Ovary (tissue), 10 donors: ENCODE measurements at regions of chr22 and their contacts with region 1.

Region 1: GRCh38 chr22:20981787-20982562 is at the start of gene LZTR1:
- DNase-seq: peak; percentile 81 to 88 (median 81)
- H3K4me3 ChIP-seq: peak within 1 kb of the TSS; percentile 84
- H3K27ac ChIP-seq: peak within 1 kb of the TSS; percentile 82 to 87
- H3K4me1 ChIP-seq: peaks cover 17% of the 10 kb centered on the region
- H3K27me3 ChIP-seq: no peaks in the 10 kb centered on the region
- CTCF ChIP-seq: peak; percentile 43 to 77 (median 71)
- EP300 ChIP-seq: no peak
- POLR2A ChIP-seq: peak; percentile 95
- total RNA-seq, gene LZTR1: 30.4 to 73.4 (median 51.6) TPM

Region 2: DNA sequence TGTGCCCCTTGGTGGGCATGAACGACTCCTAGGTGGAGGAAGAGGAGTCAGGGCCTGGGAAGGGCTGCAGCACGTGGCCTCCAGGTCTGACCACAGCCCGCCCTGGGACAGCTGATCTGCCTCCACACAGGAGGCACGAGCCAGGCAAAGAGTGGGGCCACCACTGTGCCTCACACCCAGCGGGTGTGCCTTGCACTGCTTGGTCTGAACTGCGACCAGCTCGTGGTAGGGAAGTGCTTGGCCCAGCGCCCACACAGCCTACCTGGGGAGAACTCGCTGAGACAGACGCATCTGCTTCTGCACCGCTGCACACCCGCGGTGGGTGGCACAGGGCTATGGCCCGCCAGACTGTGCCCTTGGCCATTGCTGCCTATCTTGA is 374.5 kb before region 1 on chr22:
- intact Hi-C with region 1: no loop called
- DNase-seq: no peak
- H3K4me3 ChIP-seq: no peak overlapping the region
- H3K27ac ChIP-seq: no peak overlapping the region
- H3K4me1 ChIP-seq: no peaks in the 10 kb centered on the region
- H3K27me3 ChIP-seq: no peaks in the 10 kb centered on the region
- CTCF ChIP-seq: no peak
- EP300 ChIP-seq: no peak
- POLR2A ChIP-seq: no peak

Region 3: GRCh38 chr22:21014202-21014725 is 32.3 kb after region 1 on chr22:
- intact Hi-C with region 1: no loop called
- DNase-seq: peak; percentile 88 to 93 (median 91)
- H3K4me3 ChIP-seq: peak overlapping the region; percentile 40
- H3K27ac ChIP-seq: peak overlapping the region; percentile 51 to 83
- H3K4me1 ChIP-seq: peaks cover 6% of the 10 kb centered on the region
- H3K27me3 ChIP-seq: no peaks in the 10 kb centered on the region
- CTCF ChIP-seq: no peak
- EP300 ChIP-seq: no peak
- POLR2A ChIP-seq: no peak

Region 4: GRCh38 chr22:21045585-21046294 is 63.8 kb after region 1 on chr22 and contains the start of gene LRRC74B:
- intact Hi-C with region 1: loop called in 1 of 4 experiments (anchors 5 kb)
- DNase-seq: peak; percentile 89 to 95 (median 92)
- H3K4me3 ChIP-seq: peak within 1 kb of the TSS; percentile 44
- H3K27ac ChIP-seq: peak within 1 kb of the TSS in 1 of 2 donors; percentile 52
- H3K4me1 ChIP-seq: peaks cover 4% of the 10 kb centered on the region
- H3K27me3 ChIP-seq: no peaks in the 10 kb centered on the region
- CTCF ChIP-seq: no peak
- EP300 ChIP-seq: no peak
- POLR2A ChIP-seq: no peak
- total RNA-seq, gene LRRC74B: 0.25 to 3.0 (median 0.77) TPM in 4 of 7 donors, not detected in the others

Region 5: DNA sequence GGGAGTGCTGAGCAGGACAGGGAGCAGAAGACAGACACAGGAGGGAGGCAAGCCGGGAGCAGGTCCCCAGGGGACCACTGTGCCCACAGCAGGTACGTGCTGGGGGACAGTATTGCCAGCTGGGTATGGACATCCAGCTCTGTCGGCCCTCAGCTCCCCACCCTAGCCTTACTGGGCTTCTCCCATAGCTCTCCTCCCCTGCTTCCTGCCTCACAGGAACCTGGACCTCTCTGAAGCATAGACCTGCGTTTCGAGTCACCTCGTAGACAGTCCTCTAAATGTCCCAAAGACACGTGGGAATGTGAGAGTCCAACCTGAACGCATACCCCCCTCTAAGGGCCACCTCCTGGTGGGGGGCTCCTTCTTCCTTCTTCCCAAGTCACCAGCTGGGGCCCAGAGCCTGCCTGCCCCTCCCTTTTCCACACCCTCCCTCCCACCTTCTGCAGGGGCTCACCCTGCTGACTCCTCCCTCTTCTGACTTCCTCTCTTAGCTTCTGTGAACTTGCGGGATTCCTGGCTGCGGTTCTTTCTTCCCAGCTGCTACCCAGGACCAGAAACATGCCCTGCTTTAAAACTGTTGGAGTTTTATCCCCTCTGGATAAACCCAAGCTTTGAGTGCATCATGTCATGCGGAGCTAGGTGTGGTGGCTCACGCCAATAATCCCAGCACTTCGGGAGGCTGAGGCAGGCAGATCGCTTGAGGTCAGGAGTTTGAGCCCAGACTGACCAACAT is 73.8 kb after region 1 on chr22:
- intact Hi-C with region 1: no loop called
- DNase-seq: no peak
- H3K4me3 ChIP-seq: no peak overlapping the region
- H3K27ac ChIP-seq: no peak overlapping the region
- H3K4me1 ChIP-seq: no peaks in the 10 kb centered on the region
- H3K27me3 ChIP-seq: no peaks in the 10 kb centered on the region
- CTCF ChIP-seq: no peak
- EP300 ChIP-seq: no peak
- POLR2A ChIP-seq: no peak